MCF 10A (cell line): ENCODE measurements at regions of chr1 and their contacts with region 1.

Region 1: GRCh38 chr1:179036844-179037465 is 11.3 kb downstream of the FAM20B start:
- DNase-seq: no peak
- H3K4me3 Mint-ChIP-seq: no peak overlapping the region
- H3K27ac Mint-ChIP-seq: no peak overlapping the region
- H3K4me1 Mint-ChIP-seq: peaks cover 45% of the 10 kb centered on the region
- H3K27me3 Mint-ChIP-seq: no peaks in the 10 kb centered on the region
- CTCF ChIP-seq: no peak

Region 2: DNA sequence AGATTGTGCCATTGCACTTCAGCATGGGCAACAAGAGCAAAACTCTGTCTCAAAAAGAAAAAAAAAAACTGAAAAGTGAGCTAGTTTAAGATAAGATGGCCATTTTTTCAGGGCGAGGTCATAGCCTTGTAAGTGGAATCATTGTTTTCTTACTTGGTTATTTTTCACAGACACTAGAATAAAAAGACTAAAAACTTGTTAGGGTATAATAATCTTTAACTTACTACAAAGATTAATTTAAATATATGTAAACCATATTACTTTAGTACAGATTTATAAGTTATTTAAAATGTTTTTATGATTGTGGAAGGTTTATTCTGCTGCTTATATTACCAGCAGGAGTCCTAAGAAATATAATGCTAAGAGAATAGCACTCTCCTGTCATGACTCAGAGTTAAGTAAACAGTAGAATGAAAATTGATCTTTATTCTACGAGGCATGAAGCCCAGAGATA is 189.5 kb before region 1 on chr1:
- CTCF ChIA-PET with region 1: no interaction called
- POLR2A ChIA-PET with region 1: no interaction called
- intact Hi-C with region 1: no loop called
- DNase-seq: peak; percentile 38
- H3K4me3 Mint-ChIP-seq: no peak overlapping the region
- H3K27ac Mint-ChIP-seq: no peak overlapping the region
- H3K4me1 Mint-ChIP-seq: no peaks in the 10 kb centered on the region
- H3K27me3 Mint-ChIP-seq: no peaks in the 10 kb centered on the region
- CTCF ChIP-seq: no peak

Region 3: DNA sequence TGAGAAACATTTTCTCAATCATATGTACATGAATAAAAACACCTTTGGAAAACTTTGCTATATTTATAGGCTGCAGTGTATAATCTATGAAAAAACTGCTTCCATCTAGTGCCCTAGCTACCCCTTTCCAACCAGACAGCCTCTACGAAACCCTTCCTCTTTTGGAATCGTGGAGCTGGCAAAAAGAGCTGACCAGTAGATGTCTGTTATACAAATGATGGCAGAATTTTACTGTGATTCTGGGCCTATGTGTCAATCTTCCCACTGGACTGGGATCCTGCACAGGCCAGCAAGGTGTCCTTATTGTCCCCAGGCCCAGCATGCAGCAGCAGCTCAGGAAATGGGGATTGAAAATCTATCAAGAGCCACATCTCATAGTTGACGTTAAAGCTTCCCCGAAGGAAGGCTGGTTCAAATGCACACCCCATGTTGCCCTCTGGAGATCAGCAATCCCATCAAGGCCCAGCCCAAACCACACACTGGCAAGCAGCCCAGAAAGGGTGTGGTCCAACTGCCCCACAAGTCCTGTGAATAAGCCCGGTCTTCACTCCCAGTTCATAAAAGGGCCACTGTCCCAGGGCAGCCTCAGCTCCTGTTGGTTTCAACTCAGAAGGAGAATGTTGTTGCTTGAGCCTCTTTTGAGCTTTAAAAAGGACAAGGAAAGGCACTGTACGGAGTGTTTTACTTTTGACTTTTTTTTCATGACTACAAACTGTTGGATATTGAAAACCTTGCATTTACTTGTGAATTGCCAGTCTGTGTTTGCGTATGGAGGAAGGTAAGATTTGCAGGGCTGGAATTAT is 20.0 kb before region 1 on chr1:
- CTCF ChIA-PET with region 1: interaction called, 3 read pairs
- POLR2A ChIA-PET with region 1: interaction called, 59 read pairs
- intact Hi-C with region 1: no loop called
- DNase-seq: peak; percentile 99
- H3K4me3 Mint-ChIP-seq: peak overlapping the region; percentile 26
- H3K27ac Mint-ChIP-seq: peak overlapping the region; percentile 54
- H3K4me1 Mint-ChIP-seq: peaks cover 29% of the 10 kb centered on the region
- H3K27me3 Mint-ChIP-seq: no peaks in the 10 kb centered on the region
- CTCF ChIP-seq: no peak

Region 4: GRCh38 chr1:179025125-179025974 is 11.6 kb before region 1 on chr1 and contains the start of gene FAM20B:
- CTCF ChIA-PET with region 1: interaction called, 4 read pairs
- POLR2A ChIA-PET with region 1: interaction called, 11 read pairs
- intact Hi-C with region 1: no loop called
- DNase-seq: peak; percentile 94
- H3K4me3 Mint-ChIP-seq: peak within 1 kb of the TSS; percentile 82
- H3K27ac Mint-ChIP-seq: peak within 1 kb of the TSS; percentile 68
- H3K4me1 Mint-ChIP-seq: peaks cover 31% of the 10 kb centered on the region
- H3K27me3 Mint-ChIP-seq: no peaks in the 10 kb centered on the region
- CTCF ChIP-seq: no peak
- total RNA-seq, gene FAM20B: 44.2 and 45.0 TPM in 2 replicates